MCF 10A (cell line): ENCODE measurements at regions of chr6 and their contacts with region 1.

Region 1: GRCh38 chr6:90393232-90393884 is 96.7 kb upstream of the BACH2 start:
- DNase-seq: peak; percentile 72
- H3K4me3 Mint-ChIP-seq: no peak overlapping the region
- H3K27ac Mint-ChIP-seq: no peak overlapping the region
- H3K4me1 Mint-ChIP-seq: peaks cover 10% of the 10 kb centered on the region
- H3K27me3 Mint-ChIP-seq: no peaks in the 10 kb centered on the region
- CTCF ChIP-seq: peak; percentile 68

Region 2: DNA sequence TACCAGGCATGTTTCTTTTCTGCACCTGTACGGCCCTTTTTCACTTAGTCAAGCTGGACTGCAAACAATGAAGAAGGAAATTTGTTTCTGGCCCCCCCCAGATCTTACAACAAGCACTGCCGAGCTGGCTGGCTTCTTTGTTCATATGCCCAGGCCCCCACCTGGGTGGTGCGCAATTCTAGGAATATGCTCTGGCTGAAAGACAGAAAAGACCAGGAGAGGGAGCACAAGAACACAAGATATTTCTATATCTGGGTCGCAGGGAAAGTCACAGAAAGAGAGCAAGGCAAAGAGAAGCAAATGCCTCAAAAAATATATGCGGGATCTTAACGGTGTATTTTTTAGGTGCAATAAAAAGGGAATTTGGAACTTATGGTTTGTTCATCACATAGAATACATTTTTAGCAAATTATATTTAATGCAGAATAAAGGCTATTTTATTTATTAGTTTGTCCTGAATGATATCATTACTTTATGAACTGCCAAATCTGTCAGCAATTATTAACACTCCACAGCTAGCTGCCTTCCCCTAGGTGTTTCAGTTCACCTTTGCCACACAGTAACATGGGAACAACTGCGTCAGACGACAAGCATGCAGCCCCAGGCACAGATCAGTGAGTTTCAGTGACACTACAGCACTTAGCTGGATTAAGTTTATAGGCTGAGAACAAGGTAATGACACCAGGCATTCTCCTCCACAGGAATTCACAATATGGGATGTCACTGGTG is 422.6 kb before region 1 on chr6:
- CTCF ChIA-PET with region 1: interaction called, 22 read pairs
- POLR2A ChIA-PET with region 1: no interaction called
- intact Hi-C with region 1: loop called (anchors 1 kb)
- DNase-seq: peak; percentile 68
- H3K4me3 Mint-ChIP-seq: no peak overlapping the region
- H3K27ac Mint-ChIP-seq: no peak overlapping the region
- H3K4me1 Mint-ChIP-seq: no peaks in the 10 kb centered on the region
- H3K27me3 Mint-ChIP-seq: no peaks in the 10 kb centered on the region
- CTCF ChIP-seq: peak; percentile 58

Region 3: DNA sequence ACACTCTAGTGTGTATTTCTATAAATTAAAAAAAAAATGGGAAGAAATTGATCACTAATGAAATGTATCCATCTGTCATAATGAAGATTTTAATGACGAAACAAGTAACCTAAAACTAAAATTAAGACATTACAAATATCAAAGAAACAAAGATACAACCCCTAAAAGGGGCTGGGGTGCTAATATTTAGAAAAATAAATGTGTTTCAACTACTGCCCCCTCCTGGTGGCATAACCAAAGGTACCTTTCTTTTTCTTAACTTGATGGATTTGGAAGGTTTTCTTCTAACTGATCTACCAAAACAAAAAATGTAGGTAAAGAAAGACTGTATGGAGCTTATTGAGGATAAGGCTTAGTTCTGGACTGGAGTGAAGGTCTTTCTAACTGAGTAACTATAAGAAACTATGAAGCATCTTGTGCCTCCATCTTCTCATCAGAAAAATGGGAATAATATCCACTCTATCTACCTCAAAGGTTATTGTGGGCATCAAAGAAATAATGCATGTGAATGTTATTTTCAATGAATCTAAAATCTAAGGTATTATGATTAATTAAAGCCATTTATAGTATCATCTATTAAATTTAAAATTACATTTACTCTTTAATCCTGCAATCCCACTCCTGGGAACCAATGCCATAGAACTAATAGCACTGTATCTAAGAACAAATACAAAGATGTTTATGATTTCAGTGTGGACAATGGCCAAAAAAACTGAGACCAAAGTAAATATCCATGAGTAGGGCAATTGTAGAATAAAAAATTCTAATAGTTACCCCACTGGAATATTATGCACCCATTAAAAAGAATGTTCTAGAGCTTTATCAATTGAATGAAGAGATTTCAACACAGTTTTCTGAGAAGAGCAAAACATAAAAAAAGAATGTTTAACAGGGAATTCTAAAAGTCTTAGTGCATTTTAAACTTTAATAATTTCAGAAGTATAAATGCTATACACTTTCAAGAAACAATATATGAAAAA is 213.9 kb before region 1 on chr6:
- CTCF ChIA-PET with region 1: interaction called, 15 read pairs
- POLR2A ChIA-PET with region 1: no interaction called
- intact Hi-C with region 1: no loop called
- DNase-seq: peak; percentile 31
- H3K4me3 Mint-ChIP-seq: no peak overlapping the region
- H3K27ac Mint-ChIP-seq: no peak overlapping the region
- H3K4me1 Mint-ChIP-seq: peaks cover 24% of the 10 kb centered on the region
- H3K27me3 Mint-ChIP-seq: no peaks in the 10 kb centered on the region
- CTCF ChIP-seq: peak; percentile 32

Region 4: DNA sequence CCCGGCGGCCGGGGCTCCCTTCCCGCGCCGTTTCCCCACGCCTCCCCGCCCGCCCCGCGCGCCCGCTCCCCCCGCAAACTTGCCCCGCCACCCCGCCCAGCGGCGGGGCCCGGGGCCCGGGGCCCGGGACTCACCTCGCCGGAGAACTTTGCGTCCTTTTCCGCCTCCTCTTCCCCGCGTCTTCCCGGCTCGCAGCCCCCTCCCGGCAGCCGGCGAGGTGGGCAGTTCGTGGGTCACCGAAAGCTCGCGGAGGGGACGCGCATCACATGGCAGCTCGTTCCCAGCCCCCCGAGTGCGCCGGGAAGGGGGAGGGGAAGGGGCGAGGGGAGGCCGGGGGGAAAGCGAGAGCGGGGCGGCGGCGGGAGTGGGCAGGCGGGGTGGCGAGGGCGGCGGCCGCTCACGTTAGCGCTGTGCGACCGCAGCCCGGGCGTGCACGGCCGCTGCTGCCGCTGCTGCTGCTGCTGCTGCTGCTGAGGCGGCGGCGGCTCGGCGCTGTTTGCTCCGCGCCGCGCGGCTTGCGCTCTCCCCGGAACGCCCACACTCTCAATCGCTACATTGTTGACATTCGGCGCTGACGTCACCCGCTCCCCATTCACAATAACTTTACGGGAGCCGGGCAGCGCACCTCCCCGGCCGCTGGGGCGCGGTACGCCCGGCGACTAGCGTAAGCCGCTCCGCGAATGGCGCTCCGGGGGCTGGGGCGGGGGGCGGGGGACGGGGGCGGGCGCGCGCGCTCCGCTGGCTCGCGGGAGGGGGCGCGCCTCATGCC is 96.8 kb before region 1 on chr6 and contains the start of gene BACH2:
- CTCF ChIA-PET with region 1: interaction called, 10 read pairs
- POLR2A ChIA-PET with region 1: no interaction called
- intact Hi-C with region 1: loop called (anchors 1 kb)
- DNase-seq: peak; percentile 89
- H3K4me3 Mint-ChIP-seq: peak within 1 kb of the TSS; percentile 76
- H3K27ac Mint-ChIP-seq: peak within 1 kb of the TSS; percentile 39
- H3K4me1 Mint-ChIP-seq: peaks cover 9% of the 10 kb centered on the region
- H3K27me3 Mint-ChIP-seq: peaks cover 17% of the 10 kb centered on the region
- CTCF ChIP-seq: no peak
- total RNA-seq, gene BACH2: 7.5 and 9.9 TPM in 2 replicates

Region 5: DNA sequence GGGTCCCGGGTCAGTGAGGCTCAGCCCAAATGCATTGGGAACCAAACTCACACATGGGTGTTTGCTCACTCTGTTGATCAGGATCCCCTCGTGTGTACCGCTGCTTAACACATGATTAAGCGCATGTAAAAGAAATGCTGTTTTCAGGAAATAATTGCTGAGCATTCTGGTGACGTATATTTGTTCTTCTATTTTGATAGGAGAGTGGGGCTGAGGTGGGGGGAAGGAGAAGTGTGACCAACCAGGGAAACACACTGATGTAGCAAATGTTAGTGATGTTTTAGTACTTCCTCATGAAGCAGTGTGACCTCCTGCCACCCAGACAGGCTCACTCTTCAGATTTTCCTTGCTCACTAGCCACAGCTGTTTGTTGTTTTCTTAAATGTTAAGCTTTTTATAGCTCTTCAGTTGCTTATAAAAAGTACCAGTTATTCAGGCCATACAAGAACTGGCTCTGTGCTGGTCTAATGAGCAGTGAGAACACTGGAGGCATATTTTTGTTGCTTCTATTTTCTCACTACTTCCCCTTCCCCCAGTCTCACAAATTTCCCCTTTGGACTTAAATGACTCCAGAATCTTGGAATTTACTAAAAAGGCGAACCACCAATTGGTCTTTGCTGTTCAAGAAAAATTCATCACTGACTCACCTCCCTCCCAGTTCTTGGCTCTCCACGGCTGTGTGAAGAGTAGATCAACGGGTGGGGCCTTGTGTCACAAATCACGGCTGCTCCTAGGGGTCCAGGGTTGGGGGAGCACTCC is 17.5 kb before region 1 on chr6:
- CTCF ChIA-PET with region 1: interaction called, 44 read pairs
- POLR2A ChIA-PET with region 1: interaction called, 4 read pairs
- intact Hi-C with region 1: no loop called
- DNase-seq: no peak
- H3K4me3 Mint-ChIP-seq: no peak overlapping the region
- H3K27ac Mint-ChIP-seq: peak overlapping the region; percentile 8
- H3K4me1 Mint-ChIP-seq: peaks cover 12% of the 10 kb centered on the region
- H3K27me3 Mint-ChIP-seq: no peaks in the 10 kb centered on the region
- CTCF ChIP-seq: no peak

Region 6: DNA sequence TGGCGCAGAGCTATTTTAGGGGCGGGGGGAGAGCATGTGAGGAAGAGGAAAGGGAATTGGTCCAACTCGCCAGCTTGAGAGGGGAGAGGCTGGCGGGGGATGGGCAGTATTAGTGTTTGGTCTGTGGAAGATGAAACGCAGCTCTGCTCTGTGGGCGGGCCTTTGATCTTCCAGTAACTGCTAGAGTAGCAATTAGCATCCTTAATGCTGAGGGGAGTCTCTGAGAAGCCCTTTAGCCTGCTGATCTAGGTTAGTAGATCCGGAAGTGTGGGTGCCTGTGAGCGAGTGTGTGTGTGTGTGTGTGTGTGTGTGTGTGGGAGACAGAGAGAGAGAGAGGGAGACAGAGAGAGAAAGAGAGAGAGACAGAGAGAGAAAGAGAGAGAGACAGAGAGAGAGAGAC is 20.5 kb after region 1 on chr6:
- CTCF ChIA-PET with region 1: interaction called, 15 read pairs
- POLR2A ChIA-PET with region 1: interaction called, 7 read pairs
- intact Hi-C with region 1: no loop called
- DNase-seq: no peak
- H3K4me3 Mint-ChIP-seq: no peak overlapping the region
- H3K27ac Mint-ChIP-seq: no peak overlapping the region
- H3K4me1 Mint-ChIP-seq: peaks cover 16% of the 10 kb centered on the region
- H3K27me3 Mint-ChIP-seq: no peaks in the 10 kb centered on the region
- CTCF ChIP-seq: no peak